Posterior cingulate gyrus (tissue), 11 donors: ENCODE measurements at regions of chr9 and their contacts with region 1.

Region 1: DNA sequence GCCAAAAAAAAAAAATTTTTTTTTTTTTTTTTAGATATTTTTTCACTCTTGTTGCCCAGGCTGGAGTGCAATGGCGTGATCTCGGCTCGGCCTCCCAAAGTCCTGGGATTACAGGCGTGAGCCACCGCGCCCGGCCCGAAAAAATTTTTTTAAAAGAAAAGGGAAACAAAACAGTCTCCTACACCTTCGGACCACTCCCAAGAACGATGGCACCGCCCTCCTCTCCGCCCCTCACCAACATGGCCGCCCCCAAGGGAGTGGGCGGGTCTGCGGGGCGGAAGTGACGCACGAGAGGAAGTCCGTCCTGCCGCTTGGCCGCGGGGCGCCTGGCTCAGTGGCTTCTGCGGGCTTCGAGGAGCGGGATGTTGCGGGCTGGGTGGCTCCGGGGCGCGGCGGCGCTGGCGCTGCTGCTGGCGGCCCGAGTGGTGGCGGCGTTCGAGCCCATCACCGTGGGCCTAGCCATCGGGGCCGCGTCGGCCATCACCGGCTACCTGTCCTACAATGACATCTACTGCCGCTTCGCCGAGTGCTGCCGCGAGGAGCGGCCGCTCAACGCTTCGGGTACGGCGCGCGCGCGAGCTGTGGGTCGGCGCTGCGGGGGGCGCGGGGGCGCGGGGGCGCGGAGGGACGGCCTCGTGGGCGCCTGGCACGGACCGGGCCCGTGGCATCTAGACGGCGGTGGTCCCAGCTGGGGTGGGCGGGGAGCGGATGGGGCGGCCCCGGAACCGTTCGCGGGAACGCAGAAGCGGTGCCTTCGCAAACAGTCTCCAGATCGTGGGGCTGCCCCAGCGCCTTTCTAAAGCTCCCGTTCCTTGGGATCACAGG is at the start of gene TOR1B:
- DNase-seq: peak; percentile 89 to 99 (median 94)

Region 2: DNA sequence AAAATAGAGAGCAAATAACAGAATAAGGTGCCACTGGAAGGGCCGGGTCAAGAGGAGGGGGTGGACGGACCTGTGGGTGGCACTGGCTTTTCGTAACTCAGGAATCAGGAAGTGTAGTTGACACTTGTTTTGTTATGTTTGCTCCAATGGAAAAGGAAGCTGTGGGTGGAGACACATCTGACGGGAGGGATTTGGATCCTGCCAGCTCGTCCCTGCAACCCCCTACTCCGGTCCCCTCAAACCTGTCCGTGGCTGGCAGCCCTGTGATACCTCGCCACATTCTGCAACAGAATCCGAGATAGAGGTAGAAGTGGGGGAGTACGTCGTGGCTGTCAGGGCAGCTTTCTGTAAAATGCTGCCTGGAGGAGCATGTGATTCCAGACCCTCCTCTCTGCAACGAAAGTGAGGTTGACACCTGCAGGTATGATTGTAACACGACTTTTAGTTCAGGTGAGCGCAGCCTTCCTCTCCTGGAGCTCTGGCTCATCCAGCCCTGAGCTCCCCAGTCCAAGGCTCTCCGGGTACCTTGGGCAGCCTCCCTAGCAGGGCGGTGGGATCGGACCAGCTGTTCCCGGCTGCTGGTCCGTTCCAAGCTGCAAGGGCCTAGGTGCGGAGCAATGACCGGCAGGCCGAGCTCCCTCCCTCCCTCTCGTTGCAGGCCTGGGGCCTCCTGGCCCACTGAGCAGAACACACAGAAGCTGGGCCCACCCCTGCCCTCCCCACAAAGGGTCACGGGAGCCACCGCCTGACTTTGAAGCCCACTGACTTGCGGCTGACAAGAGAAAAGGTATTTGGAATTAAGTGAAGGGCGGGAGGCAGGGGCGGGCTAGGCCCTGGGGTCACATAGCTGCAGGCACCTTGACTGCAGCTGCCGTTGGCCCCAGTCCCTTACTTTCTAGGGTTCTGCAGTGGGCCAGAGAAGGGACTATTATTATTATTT is 520.5 kb before region 1 on chr9:
- intact Hi-C with region 1: no loop called
- DNase-seq: peak in 3 of 10 donors; percentile 7 to 78 (median 31)

Region 3: DNA sequence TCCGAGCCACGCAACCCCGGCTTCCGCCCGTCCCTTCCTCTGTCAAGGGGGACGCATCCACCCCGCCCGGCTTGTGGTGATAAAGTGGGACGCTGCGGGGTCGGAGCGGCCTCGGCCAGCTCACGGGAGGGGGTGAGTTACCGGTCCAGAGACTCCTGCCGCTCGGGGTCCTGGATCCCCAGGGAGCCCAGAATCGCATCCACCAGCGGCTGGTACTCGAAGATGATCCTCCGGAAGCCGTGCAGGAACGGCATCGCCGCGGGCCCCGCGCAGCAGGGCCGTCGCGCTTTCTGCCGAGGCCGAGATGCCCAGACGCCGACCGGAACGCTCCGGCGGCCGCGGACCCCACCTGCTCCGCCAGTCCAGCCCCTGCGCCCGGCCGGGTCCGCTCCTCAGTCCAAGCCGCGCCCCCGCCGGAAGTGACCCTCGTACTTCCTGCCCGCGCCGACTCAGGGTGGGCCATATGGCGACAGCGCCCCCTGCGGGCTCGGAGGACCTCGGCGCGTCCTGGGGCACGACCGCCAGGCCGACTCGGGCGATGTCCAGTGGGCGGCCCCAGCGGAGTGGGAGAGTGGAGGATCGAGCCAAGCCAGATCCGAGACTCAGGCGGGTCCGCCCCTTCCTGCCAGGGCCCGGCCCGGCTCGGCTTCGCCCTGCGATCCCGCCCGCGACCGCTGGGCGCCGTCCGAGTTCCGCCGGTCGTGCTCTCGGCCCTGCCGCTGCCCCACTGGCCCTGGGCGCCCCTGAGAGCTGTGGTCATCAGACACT is 161.1 kb before region 1 on chr9 and contains the start of gene ASB6:
- intact Hi-C with region 1: no loop called
- DNase-seq: peak; percentile 90 to 99 (median 95)

Region 4: GRCh38 chr9:129823935-129824601 is 21.0 kb after region 1 on chr9 and contains the start of gene TOR1A:
- intact Hi-C with region 1: loop called (anchors 1 kb)
- DNase-seq: peak; percentile 90 to 98 (median 94)